Mammary epithelial cell (primary cell): ENCODE measurements at regions of chr3 and their contacts with region 1.

Region 1: GRCh38 chr3:157130467-157131251 is 29.3 kb downstream of the CCNL1 start:
- DNase-seq: peak; percentile 91
- H3K4me3 ChIP-seq: no peak overlapping the region
- H3K27ac ChIP-seq: peak overlapping the region; percentile 98
- H3K4me1 ChIP-seq: peaks cover 96% of the 10 kb centered on the region
- H3K27me3 ChIP-seq: no peaks in the 10 kb centered on the region
- CTCF ChIP-seq: peak; percentile 54 to 69

Region 2: GRCh38 chr3:156017352-156018030 is 1113.2 kb before region 1 on chr3:
- CTCF ChIA-PET with region 1: no interaction called
- dilution Hi-C with region 1: no loop called
- in situ Hi-C with region 1: no loop called
- intact Hi-C with region 1: loop called (anchors 10 kb)
- DNase-seq: no peak
- H3K4me3 ChIP-seq: no peak overlapping the region
- H3K27ac ChIP-seq: no peak overlapping the region
- H3K4me1 ChIP-seq: no peaks in the 10 kb centered on the region
- H3K27me3 ChIP-seq: no peaks in the 10 kb centered on the region
- CTCF ChIP-seq: no peak

Region 3: GRCh38 chr3:156416846-156417558 is 713.7 kb before region 1 on chr3:
- CTCF ChIA-PET with region 1: no interaction called
- dilution Hi-C with region 1: no loop called
- in situ Hi-C with region 1: no loop called
- intact Hi-C with region 1: no loop called
- DNase-seq: no peak
- H3K4me3 ChIP-seq: no peak overlapping the region
- H3K27ac ChIP-seq: no peak overlapping the region
- H3K4me1 ChIP-seq: no peaks in the 10 kb centered on the region
- H3K27me3 ChIP-seq: no peaks in the 10 kb centered on the region
- CTCF ChIP-seq: no peak

Region 4: DNA sequence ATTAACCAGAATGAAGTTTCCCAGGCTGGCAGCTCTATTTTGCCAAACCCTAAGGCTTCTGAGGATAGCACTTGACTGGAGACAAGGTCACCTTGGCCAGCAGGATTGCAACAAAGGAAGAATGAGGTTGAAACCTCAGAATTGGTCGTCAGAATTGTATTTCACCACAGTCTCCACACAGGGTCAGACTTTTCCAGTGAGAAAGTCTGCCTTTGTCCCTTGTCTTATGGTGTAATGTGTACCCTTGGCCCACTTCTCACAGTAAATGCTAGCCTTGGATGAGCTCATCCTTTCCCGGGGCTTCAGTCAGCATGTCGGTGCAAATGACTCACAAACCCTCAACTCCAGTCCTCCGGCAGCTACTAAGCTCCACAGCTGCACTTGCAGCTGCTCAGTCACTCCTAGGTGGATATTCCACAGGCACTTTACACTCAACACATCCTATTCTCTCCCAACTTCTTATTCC is 595.5 kb before region 1 on chr3:
- CTCF ChIA-PET with region 1: no interaction called
- dilution Hi-C with region 1: no loop called
- in situ Hi-C with region 1: no loop called
- intact Hi-C with region 1: loop called (anchors 5 kb)
- DNase-seq: peak; percentile 93
- H3K4me3 ChIP-seq: no peak overlapping the region
- H3K27ac ChIP-seq: peak overlapping the region; percentile 3
- H3K4me1 ChIP-seq: peaks cover 11% of the 10 kb centered on the region
- H3K27me3 ChIP-seq: no peaks in the 10 kb centered on the region
- CTCF ChIP-seq: peak; percentile 10 to 23

Region 5: DNA sequence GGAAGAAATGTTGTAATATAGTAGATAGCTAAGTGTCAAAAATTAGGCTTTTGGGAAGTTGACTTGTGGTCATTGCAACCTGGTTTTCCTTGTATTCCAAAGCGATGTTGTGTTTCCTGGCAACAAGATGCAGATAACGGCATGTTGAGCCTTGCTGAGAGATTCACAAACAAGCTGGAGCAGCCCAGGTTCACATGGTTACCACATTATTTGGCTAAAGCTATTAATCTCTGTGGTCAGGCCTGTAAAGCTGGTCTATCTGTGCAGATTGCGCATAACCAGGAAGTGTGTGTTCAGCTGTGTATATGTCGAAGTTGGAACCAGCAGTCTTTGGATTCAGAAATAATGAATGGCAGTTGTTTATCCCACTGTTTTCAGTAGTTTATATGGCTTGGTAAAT is 449.7 kb before region 1 on chr3:
- CTCF ChIA-PET with region 1: no interaction called
- dilution Hi-C with region 1: loop called (anchors 5 kb)
- in situ Hi-C with region 1: loop called in 1 of 2 experiments (anchors 10 kb)
- intact Hi-C with region 1: no loop called
- DNase-seq: peak; percentile 97
- H3K4me3 ChIP-seq: peak overlapping the region in 1 of 3 experiments; percentile 94
- H3K27ac ChIP-seq: peak overlapping the region; percentile 99
- H3K4me1 ChIP-seq: peaks cover 84% of the 10 kb centered on the region
- H3K27me3 ChIP-seq: no peaks in the 10 kb centered on the region
- CTCF ChIP-seq: no peak

Region 6: GRCh38 chr3:156816800-156817645 is 313.6 kb before region 1 on chr3:
- CTCF ChIA-PET with region 1: interaction called, 8 read pairs
- dilution Hi-C with region 1: no loop called
- in situ Hi-C with region 1: loop called in 1 of 2 experiments (anchors 5 kb)
- intact Hi-C with region 1: loop called (anchors 1 kb)
- DNase-seq: peak; percentile 87
- H3K4me3 ChIP-seq: peak overlapping the region in 2 of 3 experiments; percentile 20 to 28
- H3K27ac ChIP-seq: peak overlapping the region; percentile 97
- H3K4me1 ChIP-seq: peaks cover 57% of the 10 kb centered on the region
- H3K27me3 ChIP-seq: no peaks in the 10 kb centered on the region
- CTCF ChIP-seq: peak in 1 of 2 donors; percentile 28

Region 7: GRCh38 chr3:156964577-156964976 is 166.1 kb before region 1 on chr3:
- CTCF ChIA-PET with region 1: no interaction called
- dilution Hi-C with region 1: no loop called
- in situ Hi-C with region 1: no loop called
- intact Hi-C with region 1: no loop called
- DNase-seq: no peak
- H3K4me3 ChIP-seq: no peak overlapping the region
- H3K27ac ChIP-seq: no peak overlapping the region
- H3K4me1 ChIP-seq: no peaks in the 10 kb centered on the region
- H3K27me3 ChIP-seq: no peaks in the 10 kb centered on the region
- CTCF ChIP-seq: no peak

Region 8: GRCh38 chr3:157081681-157082210 is 48.9 kb before region 1 on chr3:
- CTCF ChIA-PET with region 1: interaction called, 14 read pairs
- dilution Hi-C with region 1: loop called (anchors 5 kb)
- in situ Hi-C with region 1: loop called (anchors 5 kb)
- intact Hi-C with region 1: loop called (anchors 1 kb)
- DNase-seq: peak; percentile 98
- H3K4me3 ChIP-seq: no peak overlapping the region
- H3K27ac ChIP-seq: peak overlapping the region; percentile 97
- H3K4me1 ChIP-seq: peaks cover 41% of the 10 kb centered on the region
- H3K27me3 ChIP-seq: no peaks in the 10 kb centered on the region
- CTCF ChIP-seq: peak; percentile 85 to 99

Region 9: GRCh38 chr3:157499342-157499963 is 368.8 kb after region 1 on chr3:
- CTCF ChIA-PET with region 1: no interaction called
- dilution Hi-C with region 1: no loop called
- in situ Hi-C with region 1: no loop called
- intact Hi-C with region 1: no loop called
- DNase-seq: peak; percentile 62
- H3K4me3 ChIP-seq: peak overlapping the region; percentile 33 to 47 (median 36)
- H3K27ac ChIP-seq: no peak overlapping the region
- H3K4me1 ChIP-seq: peaks cover 17% of the 10 kb centered on the region
- H3K27me3 ChIP-seq: no peaks in the 10 kb centered on the region
- CTCF ChIP-seq: no peak